ENCODE measurements at regions of chr12 and their contacts with region 1.

Region 1: GRCh38 chr12:94545935-94546771 is 86.5 kb upstream of the CEP83 start:
- DNase-seq: no peak
- ATAC-seq: peak; percentile 73

Region 2: GRCh38 chr12:94359761-94360160 is 186.4 kb before region 1 on chr12:
- intact Hi-C with region 1: no loop called
- DNase-seq: no peak
- ATAC-seq: no peak

Region 3: GRCh38 chr12:94571556-94571955 is 25.4 kb after region 1 on chr12:
- intact Hi-C with region 1: no loop called
- DNase-seq: no peak
- ATAC-seq: no peak

Region 4: DNA sequence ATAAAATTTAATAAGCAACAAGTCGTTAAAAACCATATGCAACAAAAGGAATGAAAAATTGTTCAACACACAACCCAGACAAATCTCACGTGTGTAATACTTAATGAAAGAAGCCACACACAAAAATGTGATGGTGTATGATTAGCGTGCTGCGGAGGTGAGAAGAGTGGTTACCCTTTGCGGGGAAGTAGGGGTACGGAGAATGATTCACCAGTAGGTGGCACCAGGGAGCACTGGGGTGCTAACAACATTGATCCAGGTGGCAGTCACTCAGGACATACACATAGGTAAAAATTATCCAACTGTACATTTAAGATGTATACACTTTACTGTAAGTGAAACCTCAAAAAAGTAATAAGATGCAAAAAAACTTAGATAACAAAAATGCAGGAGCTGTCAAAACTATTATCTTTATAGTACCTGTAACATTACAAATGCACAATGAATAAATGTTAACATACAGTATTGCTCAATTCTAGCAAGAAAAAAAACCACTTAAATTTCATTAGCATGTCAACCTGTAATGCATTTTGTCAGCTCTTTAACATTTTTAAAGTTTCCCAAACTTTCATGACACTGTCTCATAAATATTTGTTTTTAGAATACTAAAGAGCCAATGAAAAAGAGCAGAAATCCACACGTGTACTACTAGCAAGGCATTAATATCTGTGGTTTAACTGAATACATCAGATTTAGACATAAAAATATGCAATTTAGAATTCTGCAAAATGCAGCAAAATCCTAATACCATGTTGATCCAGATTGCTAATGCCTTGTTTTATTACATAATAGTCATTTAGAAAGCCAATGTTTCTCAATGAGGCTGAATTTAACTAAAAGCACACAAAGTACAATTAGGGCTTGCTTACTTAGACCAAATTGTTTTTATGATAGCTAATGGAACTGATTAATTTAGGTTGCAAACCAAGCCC is 57.5 kb after region 1 on chr12:
- intact Hi-C with region 1: loop called (anchors 2 kb)
- DNase-seq: peak; percentile 76
- ATAC-seq: no peak

Region 5: GRCh38 chr12:94614288-94614721 is 68.2 kb after region 1 on chr12:
- intact Hi-C with region 1: no loop called
- DNase-seq: no peak
- ATAC-seq: no peak

Region 6: DNA sequence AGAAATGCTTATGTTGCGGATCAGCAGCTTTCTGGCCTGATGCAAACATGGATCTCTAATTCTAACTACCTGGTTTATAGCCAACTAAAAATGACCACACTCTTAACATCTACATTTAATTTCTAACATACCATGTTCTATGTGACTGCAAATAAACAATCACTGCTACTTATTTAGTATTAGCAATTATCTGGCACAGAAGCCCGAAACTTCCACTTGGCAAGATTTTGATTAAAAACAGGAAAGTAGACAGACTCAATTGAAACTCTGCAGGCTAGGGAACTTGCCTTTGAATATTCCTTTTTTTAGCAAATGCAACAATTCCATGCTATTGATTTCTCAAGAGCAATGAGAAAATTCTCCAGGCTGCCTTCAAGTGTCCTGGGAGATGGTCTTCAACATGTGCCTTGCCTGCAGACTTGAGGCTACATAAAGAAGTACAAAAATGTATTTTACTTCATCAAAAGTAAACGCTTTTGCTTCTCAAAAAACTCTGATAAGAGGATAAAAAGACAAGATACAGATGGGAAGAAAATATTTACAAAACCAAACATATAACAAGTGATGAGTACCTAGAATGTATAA is 113.3 kb after region 1 on chr12:
- intact Hi-C with region 1: loop called (anchors 5 kb)
- DNase-seq: no peak
- ATAC-seq: no peak

Region 7: DNA sequence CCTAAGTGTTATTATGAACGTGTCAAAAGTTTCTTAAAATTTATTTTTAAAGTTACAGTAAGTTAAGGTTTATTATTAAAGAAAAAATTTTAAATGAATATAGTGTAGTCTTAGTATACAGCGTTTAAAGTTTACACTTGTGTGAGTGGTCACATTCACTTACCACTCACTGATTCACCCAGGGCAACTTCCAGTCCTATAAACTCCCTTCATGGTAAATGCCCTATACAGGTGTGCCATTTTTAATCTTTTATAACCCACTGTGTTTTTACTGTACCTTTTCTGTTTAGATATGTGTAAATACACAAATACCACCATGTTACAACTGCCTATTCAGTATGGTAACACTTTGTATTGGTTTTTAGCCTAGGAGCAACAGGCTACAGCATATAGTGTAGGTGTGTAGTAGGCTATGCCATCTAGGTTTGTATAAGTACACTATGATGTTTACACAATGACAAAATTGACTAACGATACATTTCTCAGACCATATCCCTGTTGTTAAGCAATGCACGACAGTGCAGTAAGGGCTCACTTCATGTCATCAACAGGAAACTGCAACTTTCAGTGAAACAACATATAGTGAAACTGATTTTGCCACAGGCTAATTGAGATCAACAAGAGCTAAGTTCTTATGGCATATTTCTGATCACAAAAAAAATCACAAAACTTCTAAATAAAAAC is 216.2 kb after region 1 on chr12:
- intact Hi-C with region 1: loop called (anchors 5 kb)
- DNase-seq: no peak
- ATAC-seq: no peak